B cell (primary cell): ENCODE measurements at regions of chr17 and their contacts with region 1.

Region 1: GRCh38 chr17:7856883-7857723 is at the start of gene NAA38:
- DNase-seq: peak; percentile 99
- ATAC-seq: peak; percentile 82
- H3K4me3 ChIP-seq: peak within 1 kb of the TSS; percentile 57 to 92 (median 85)
- H3K4me3 Mint-ChIP-seq: no peak within 1 kb of the TSS
- H3K27ac ChIP-seq: peak within 1 kb of the TSS; percentile 85 to 90
- H3K27ac Mint-ChIP-seq: no peak within 1 kb of the TSS
- H3K4me1 ChIP-seq: peaks cover 20 to 32% of the 10 kb centered on the region in 2 donors
- H3K4me1 Mint-ChIP-seq: peaks cover 5% of the 10 kb centered on the region
- H3K27me3 ChIP-seq: no peaks in the 10 kb centered on the region
- H3K27me3 Mint-ChIP-seq: no peaks in the 10 kb centered on the region
- CTCF ChIP-seq: no peak
- total RNA-seq, gene NAA38: 20.0 and 22.0 TPM in 2 replicates

Region 2: DNA sequence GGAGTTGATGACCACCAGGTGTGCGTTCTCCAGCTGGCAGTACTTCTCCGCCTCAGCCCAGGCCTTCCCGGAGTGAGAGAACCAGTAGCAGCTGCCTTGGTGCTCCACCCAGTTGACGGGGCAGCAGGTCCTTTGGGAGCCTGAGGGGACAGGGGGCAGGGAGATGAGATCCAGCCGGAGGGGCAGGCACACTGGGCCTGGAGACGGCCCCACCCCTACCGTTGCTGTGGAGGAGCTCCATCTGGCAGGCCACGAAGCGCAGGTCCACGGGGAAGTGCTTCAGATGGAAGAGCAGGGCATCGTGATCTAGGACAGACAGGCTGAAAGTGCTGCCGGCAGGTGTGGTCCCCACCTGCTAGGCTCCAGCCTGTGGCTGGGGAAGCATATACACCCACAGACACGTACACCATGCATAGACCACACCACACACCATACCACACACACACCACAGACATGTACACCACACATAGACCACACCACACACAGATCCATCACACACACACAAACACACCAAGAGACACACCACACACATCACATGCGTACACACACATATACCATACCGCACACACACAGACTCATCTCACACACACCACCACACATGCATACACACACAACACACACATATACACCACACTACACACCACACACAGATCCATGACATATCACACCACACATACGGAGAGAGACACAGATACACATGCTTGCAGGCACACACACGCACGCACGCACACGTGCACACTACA is 749.9 kb before region 1 on chr17:
- CTCF ChIA-PET with region 1: no interaction called
- POLR2A ChIA-PET with region 1: no interaction called
- intact Hi-C with region 1: no loop called
- DNase-seq: no peak
- ATAC-seq: no peak
- H3K4me3 ChIP-seq: no peak overlapping the region
- H3K4me3 Mint-ChIP-seq: no peak overlapping the region
- H3K27ac ChIP-seq: no peak overlapping the region
- H3K27ac Mint-ChIP-seq: no peak overlapping the region
- H3K4me1 ChIP-seq: peaks cover 6 to 7% of the 10 kb centered on the region in 2 donors
- H3K4me1 Mint-ChIP-seq: peaks cover 7% of the 10 kb centered on the region
- H3K27me3 ChIP-seq: peaks cover 0 to 11% (median 0%) of the 10 kb centered on the region in 4 experiments
- H3K27me3 Mint-ChIP-seq: peaks cover 28% of the 10 kb centered on the region
- CTCF ChIP-seq: no peak

Region 3: GRCh38 chr17:7755095-7755890 is 101.8 kb before region 1 on chr17:
- CTCF ChIA-PET with region 1: no interaction called
- POLR2A ChIA-PET with region 1: no interaction called
- intact Hi-C with region 1: no loop called
- DNase-seq: no peak
- ATAC-seq: no peak
- H3K4me3 ChIP-seq: no peak overlapping the region
- H3K4me3 Mint-ChIP-seq: no peak overlapping the region
- H3K27ac ChIP-seq: no peak overlapping the region
- H3K27ac Mint-ChIP-seq: no peak overlapping the region
- H3K4me1 ChIP-seq: no peaks in the 10 kb centered on the region
- H3K4me1 Mint-ChIP-seq: no peaks in the 10 kb centered on the region
- H3K27me3 ChIP-seq: peaks cover 0 to 5% (median 0%) of the 10 kb centered on the region in 4 experiments
- H3K27me3 Mint-ChIP-seq: peaks cover 27% of the 10 kb centered on the region
- CTCF ChIP-seq: no peak

Region 4: DNA sequence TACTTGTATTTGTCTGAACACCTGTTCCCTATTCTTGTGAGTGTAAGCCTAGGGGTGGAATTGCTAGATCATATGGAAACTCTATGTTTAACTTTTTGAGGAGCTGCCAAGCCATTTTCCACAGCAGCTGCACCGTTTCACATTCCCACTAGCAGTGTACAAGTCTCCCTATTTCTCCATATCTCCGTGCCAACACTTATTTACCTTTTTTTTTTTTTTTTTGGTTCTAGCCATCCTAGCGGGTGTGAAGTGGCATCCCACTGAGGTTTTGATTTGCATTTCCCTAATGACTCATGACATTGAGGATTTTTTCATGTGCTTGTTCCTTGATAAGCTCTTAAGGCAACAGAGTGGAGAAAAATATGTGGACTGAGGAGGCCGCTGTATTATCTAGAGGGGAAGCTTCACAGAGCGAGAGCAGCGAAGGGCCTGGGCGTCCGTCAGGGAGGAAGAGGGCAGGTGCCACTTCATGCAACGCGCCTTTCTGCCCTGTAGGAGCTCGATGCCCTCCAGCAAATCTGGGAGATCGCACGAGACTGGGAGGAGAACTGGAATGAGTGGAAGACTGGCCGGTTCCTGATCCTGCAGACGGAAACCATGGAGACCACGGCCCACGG is 89.6 kb before region 1 on chr17:
- CTCF ChIA-PET with region 1: no interaction called
- POLR2A ChIA-PET with region 1: no interaction called
- intact Hi-C with region 1: no loop called
- DNase-seq: no peak
- ATAC-seq: no peak
- H3K4me3 ChIP-seq: no peak overlapping the region
- H3K4me3 Mint-ChIP-seq: no peak overlapping the region
- H3K27ac ChIP-seq: no peak overlapping the region
- H3K27ac Mint-ChIP-seq: no peak overlapping the region
- H3K4me1 ChIP-seq: no peaks in the 10 kb centered on the region
- H3K4me1 Mint-ChIP-seq: no peaks in the 10 kb centered on the region
- H3K27me3 ChIP-seq: no peaks in the 10 kb centered on the region
- H3K27me3 Mint-ChIP-seq: peaks cover 25% of the 10 kb centered on the region
- CTCF ChIP-seq: no peak

Region 5: DNA sequence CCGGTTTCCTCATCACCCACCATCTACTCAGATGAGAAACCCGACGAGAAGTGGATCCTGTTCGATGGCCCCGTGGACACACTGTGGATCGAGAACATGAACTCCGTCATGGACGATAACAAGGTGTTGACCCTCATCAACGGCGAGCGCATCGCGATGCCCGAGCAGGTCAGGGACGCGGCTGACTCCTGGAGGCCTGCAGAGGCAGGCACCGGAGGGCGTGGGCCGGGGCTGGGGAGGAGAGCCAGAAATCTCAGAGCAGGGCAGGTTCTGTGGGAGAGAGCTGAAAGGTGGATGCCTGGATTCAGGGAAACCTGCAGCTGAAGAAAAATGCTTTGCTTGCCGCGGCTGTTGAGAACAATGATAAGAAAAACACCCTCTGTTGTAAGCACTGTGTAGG is 70.2 kb before region 1 on chr17:
- CTCF ChIA-PET with region 1: no interaction called
- POLR2A ChIA-PET with region 1: no interaction called
- intact Hi-C with region 1: no loop called
- DNase-seq: no peak
- ATAC-seq: no peak
- H3K4me3 ChIP-seq: no peak overlapping the region
- H3K4me3 Mint-ChIP-seq: no peak overlapping the region
- H3K27ac ChIP-seq: no peak overlapping the region
- H3K27ac Mint-ChIP-seq: no peak overlapping the region
- H3K4me1 ChIP-seq: peaks cover 0 to 2% of the 10 kb centered on the region in 2 donors
- H3K4me1 Mint-ChIP-seq: no peaks in the 10 kb centered on the region
- H3K27me3 ChIP-seq: peaks cover 0 to 3% (median 0%) of the 10 kb centered on the region in 4 experiments
- H3K27me3 Mint-ChIP-seq: peaks cover 7% of the 10 kb centered on the region
- CTCF ChIP-seq: no peak

Region 6: DNA sequence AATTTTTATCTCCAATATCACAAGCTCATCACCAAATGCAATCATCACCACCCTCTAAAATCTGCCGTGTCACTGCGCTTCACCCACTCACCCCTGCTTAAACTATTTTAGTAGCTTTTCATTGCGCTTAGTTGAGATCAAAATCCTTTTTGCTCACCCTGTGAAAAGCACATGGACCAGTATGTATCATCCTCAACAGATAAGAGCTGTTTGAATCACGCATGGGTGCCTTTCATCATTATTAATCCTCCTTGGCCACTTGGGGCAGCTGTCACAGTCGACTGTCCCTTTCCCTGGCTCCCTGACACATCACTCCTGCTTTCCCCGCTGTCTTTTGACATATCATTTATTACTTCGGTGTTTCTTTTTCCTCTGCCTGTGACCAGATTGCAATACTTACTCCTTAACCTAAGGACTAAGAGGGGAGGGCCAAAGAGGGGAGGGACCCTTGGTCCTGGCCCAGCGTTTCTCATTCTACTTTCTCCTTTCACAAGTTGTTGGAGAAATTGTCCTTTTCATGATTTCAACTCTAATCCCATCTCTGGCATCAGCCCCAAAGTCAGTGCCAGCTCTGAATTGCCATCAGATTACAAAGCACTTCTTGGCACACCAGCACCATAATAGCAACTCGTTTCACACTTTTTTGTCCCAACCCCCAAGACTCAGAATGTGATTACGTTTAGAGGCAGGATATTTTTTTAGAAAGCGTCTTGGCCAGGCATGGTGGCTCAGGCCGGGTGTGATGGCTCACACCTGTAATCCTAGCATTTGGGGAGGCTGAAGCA is 31.7 kb before region 1 on chr17:
- CTCF ChIA-PET with region 1: interaction called, 11 read pairs
- POLR2A ChIA-PET with region 1: no interaction called
- intact Hi-C with region 1: no loop called
- DNase-seq: no peak
- ATAC-seq: no peak
- H3K4me3 ChIP-seq: no peak overlapping the region
- H3K4me3 Mint-ChIP-seq: no peak overlapping the region
- H3K27ac ChIP-seq: no peak overlapping the region
- H3K27ac Mint-ChIP-seq: no peak overlapping the region
- H3K4me1 ChIP-seq: no peaks in the 10 kb centered on the region
- H3K4me1 Mint-ChIP-seq: no peaks in the 10 kb centered on the region
- H3K27me3 ChIP-seq: peaks cover 0 to 2% (median under 1%) of the 10 kb centered on the region in 4 experiments
- H3K27me3 Mint-ChIP-seq: peaks cover 21% of the 10 kb centered on the region
- CTCF ChIP-seq: no peak

Region 7: GRCh38 chr17:7887482-7888183 is 30.5 kb after region 1 on chr17:
- CTCF ChIA-PET with region 1: interaction called, 3 read pairs
- POLR2A ChIA-PET with region 1: interaction called, 8 read pairs
- intact Hi-C with region 1: loop called (anchors 1 kb)
- DNase-seq: peak; percentile 86
- ATAC-seq: peak; percentile 75
- H3K4me3 ChIP-seq: peak overlapping the region; percentile 65 to 95 (median 79)
- H3K4me3 Mint-ChIP-seq: no peak overlapping the region
- H3K27ac ChIP-seq: peak overlapping the region; percentile 46 to 68
- H3K27ac Mint-ChIP-seq: no peak overlapping the region
- H3K4me1 ChIP-seq: peaks cover 19 to 36% of the 10 kb centered on the region in 2 donors
- H3K4me1 Mint-ChIP-seq: peaks cover 3% of the 10 kb centered on the region
- H3K27me3 ChIP-seq: no peaks in the 10 kb centered on the region
- H3K27me3 Mint-ChIP-seq: no peaks in the 10 kb centered on the region
- CTCF ChIP-seq: no peak

Region 8: GRCh38 chr17:7931709-7932482 is 74.8 kb after region 1 on chr17 and contains the starts of genes CNTROB and TRAPPC1:
- CTCF ChIA-PET with region 1: interaction called, 11 read pairs
- POLR2A ChIA-PET with region 1: interaction called, 4 read pairs
- intact Hi-C with region 1: loop called (anchors 1 kb)
- DNase-seq: peak; percentile 100
- ATAC-seq: peak; percentile 98
- H3K4me3 ChIP-seq: peak within 1 kb of the TSS; percentile 75 to 98 (median 89)
- H3K4me3 Mint-ChIP-seq: peak within 1 kb of the TSS; percentile 95
- H3K27ac ChIP-seq: peak within 1 kb of the TSS; percentile 77 to 88
- H3K27ac Mint-ChIP-seq: peak within 1 kb of the TSS; percentile 95
- H3K4me1 ChIP-seq: peaks cover 18 to 33% of the 10 kb centered on the region in 2 donors
- H3K4me1 Mint-ChIP-seq: peaks cover 44% of the 10 kb centered on the region
- H3K27me3 ChIP-seq: no peaks in the 10 kb centered on the region
- H3K27me3 Mint-ChIP-seq: no peaks in the 10 kb centered on the region
- CTCF ChIP-seq: no peak
- total RNA-seq, gene CNTROB: 34.8 and 40.4 TPM in 2 replicates
- total RNA-seq, gene TRAPPC1: 86.0 and 118 TPM in 2 replicates